ENCODE measurements at regions of chrX and their contacts with region 1.

Region 1: GRCh38 chrX:104913348-104913747 is 307.1 kb downstream of the TEX13A start:
- DNase-seq: peak in 1 of 9 donors; percentile 1
- ATAC-seq: no peak
- H3K4me3 ChIP-seq: no peak overlapping the region
- H3K4me3 Mint-ChIP-seq: no peak overlapping the region
- H3K27ac ChIP-seq: no peak overlapping the region
- H3K27ac Mint-ChIP-seq: peak overlapping the region in 1 of 9 donors; percentile 40
- H3K4me1 ChIP-seq: no peaks in the 10 kb centered on the region
- H3K4me1 Mint-ChIP-seq: peaks cover 0 to 33% (median 22%) of the 10 kb centered on the region in 7 donors
- H3K27me3 ChIP-seq: no peaks in the 10 kb centered on the region
- H3K27me3 Mint-ChIP-seq: no peaks in the 10 kb centered on the region

Region 2: GRCh38 chrX:104165894-104166737 is 747.2 kb before region 1 on chrX and contains the start of gene FAM199X:
- CTCF ChIA-PET with region 1: no interaction called
- POLR2A ChIA-PET with region 1: no interaction called
- intact Hi-C with region 1: loop called in 1 of 2 experiments (anchors 5 kb)
- DNase-seq: peak; percentile 74 to 84 (median 79)
- ATAC-seq: peak; percentile 99
- H3K4me3 ChIP-seq: peak within 1 kb of the TSS; percentile 68
- H3K4me3 Mint-ChIP-seq: peak within 1 kb of the TSS; percentile 82 to 91 (median 86)
- H3K27ac ChIP-seq: peak within 1 kb of the TSS; percentile 83
- H3K27ac Mint-ChIP-seq: peak within 1 kb of the TSS; percentile 85 to 97 (median 87)
- H3K4me1 ChIP-seq: peaks cover 0 to 3% of the 10 kb centered on the region in 2 donors
- H3K4me1 Mint-ChIP-seq: peaks cover 28 to 41% (median 37%) of the 10 kb centered on the region in 7 donors
- H3K27me3 ChIP-seq: no peaks in the 10 kb centered on the region
- H3K27me3 Mint-ChIP-seq: no peaks in the 10 kb centered on the region
- total RNA-seq, gene FAM199X: 12.6 to 20.4 (median 13.4) TPM

Measured in naive thymus-derived CD4-positive, alpha-beta T cell (primary cell).